Left cardiac atrium (tissue), 4 donors: ENCODE measurements at regions of chr21 and their contacts with region 1.

Region 1: GRCh38 chr21:21232320-21232719 is 234.1 kb downstream of the NCAM2 start:
- DNase-seq: no peak
- ATAC-seq: no peak

Region 2: DNA sequence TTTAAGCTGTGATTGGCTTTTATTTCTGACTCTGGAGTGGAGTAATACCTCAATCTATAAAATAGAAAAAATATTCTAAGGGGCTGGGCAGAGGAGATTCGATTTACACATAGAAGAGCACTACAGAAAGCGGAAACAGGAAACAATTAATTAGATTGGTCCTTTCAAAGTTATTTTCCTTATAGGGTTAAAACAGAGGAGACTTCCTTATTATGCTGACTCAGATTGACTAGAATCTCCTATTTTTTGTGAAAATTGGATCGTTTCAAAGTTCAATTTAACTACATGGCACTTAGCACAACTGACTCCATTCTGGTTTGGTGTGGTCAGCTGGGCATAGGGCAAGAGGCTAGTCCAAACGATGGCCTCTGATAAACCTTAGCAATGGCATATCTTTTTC is 282.4 kb before region 1 on chr21:
- intact Hi-C with region 1: no loop called
- DNase-seq: no peak
- ATAC-seq: no peak

Region 3: DNA sequence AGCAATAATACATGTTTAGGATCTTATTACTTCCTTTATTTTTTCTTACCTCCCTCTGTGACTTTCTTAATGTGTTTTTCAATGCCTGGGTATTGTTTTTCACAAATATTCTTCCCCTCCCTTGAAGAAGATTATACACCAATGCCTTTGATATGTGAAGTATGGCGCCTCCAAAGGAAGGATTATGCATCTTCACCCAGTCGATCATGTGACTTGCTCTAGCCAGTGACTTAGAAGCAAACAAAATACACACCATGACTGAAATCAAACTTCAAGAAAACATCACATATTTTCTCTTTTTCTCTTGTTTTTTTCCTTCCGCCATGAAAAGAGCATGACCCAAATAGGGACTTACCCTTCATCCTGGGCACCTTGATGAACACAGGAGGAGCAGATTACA is 63.0 kb after region 1 on chr21:
- intact Hi-C with region 1: loop called in 1 of 2 experiments (anchors 10 kb)
- DNase-seq: no peak
- ATAC-seq: no peak